ENCODE measurements at regions of chr3 and their contacts with region 1.

Region 1: DNA sequence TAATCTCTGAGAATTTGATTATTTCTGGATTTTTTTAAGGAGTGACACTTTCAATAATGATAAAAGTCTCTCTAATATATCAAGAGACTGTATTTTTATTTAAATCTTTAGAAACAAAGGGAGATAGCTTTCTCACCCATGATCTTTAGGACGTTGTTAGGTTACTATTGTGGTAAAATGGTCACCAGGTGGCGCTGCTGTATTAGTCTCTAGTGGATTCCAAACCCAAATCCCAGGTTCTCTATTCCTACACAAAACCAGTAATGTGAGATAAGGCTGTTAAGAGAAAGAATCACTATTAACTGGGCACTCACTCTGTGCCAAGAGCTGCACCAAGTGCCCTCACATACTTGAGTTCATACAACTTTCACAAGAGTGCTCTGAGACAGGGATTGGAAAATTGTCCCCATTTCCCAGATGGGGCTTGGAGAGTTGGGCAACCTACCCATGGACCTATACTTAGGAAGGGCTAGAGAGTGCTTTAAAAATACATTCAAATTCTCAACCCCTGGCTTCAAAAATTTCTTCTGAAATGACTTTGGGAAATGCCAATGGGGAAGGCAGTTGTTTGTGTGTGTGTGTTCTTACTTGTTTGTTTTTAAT is 593.4 kb upstream of the TGFBR2 start:
- DNase-seq: peak; percentile 58
- H3K4me3 ChIP-seq: no peak overlapping the region
- H3K27ac ChIP-seq: no peak overlapping the region
- H3K4me1 ChIP-seq: no peaks in the 10 kb centered on the region
- H3K27me3 ChIP-seq: no peaks in the 10 kb centered on the region
- CTCF ChIP-seq: peak; percentile 65 to 70

Region 2: GRCh38 chr3:28853830-28854229 is 1159.2 kb before region 1 on chr3:
- CTCF ChIA-PET with region 1: no interaction called
- dilution Hi-C with region 1: no loop called
- in situ Hi-C with region 1: no loop called
- intact Hi-C with region 1: loop called (anchors 10 kb)
- DNase-seq: no peak
- H3K4me3 ChIP-seq: no peak overlapping the region
- H3K27ac ChIP-seq: no peak overlapping the region
- H3K4me1 ChIP-seq: peaks cover 4% of the 10 kb centered on the region
- H3K27me3 ChIP-seq: no peaks in the 10 kb centered on the region
- CTCF ChIP-seq: peak in 1 of 2 donors; percentile 23

Region 3: DNA sequence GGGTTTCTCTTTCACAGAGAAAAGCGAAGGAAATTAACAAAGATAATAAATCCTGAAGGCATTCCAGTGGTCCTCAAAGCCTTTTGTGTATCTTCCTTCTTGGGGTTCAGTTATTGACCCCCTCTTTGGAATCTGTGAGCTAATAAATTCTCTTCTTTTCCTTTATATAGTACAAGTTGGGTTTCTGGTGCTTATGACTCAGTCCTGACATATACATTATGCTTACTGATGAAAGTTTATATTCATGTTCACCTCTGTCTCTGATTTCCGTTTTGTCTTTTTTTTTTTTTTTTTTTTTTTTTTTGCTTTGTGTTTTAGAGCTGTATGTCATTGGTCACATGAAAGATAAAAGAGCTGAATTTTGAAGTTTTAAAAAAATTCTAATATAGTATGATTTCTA is 962.9 kb before region 1 on chr3:
- CTCF ChIA-PET with region 1: interaction called, 24 read pairs
- dilution Hi-C with region 1: no loop called
- in situ Hi-C with region 1: no loop called
- intact Hi-C with region 1: no loop called
- DNase-seq: no peak
- H3K4me3 ChIP-seq: no peak overlapping the region
- H3K27ac ChIP-seq: no peak overlapping the region
- H3K4me1 ChIP-seq: no peaks in the 10 kb centered on the region
- H3K27me3 ChIP-seq: no peaks in the 10 kb centered on the region
- CTCF ChIP-seq: no peak

Measured in mammary epithelial cell (primary cell).